ENCODE measurements at regions of chr2 and their contacts with region 1.

Region 1: GRCh38 chr2:158456309-158457066 is at the starts of genes CCDC148 and PKP4:
- DNase-seq: peak; percentile 94
- H3K4me3 ChIP-seq: peak within 1 kb of the TSS; percentile 53 to 86 (median 81)
- H3K27ac ChIP-seq: peak within 1 kb of the TSS; percentile 75
- H3K4me1 ChIP-seq: peaks cover 36% of the 10 kb centered on the region
- H3K27me3 ChIP-seq: peaks cover 7 to 13% of the 10 kb centered on the region in 2 experiments
- CTCF ChIP-seq: no peak
- POLR2A ChIP-seq: no peak
- total RNA-seq, gene CCDC148: 0.69 TPM in 1 of 2 replicates, not detected in the other
- total RNA-seq, gene PKP4: 55.1 and 68.5 TPM in 2 replicates

Region 2: GRCh38 chr2:157784169-157784822 is 672.2 kb before region 1 on chr2:
- CTCF ChIA-PET with region 1: no interaction called
- POLR2A ChIA-PET with region 1: no interaction called
- dilution Hi-C with region 1: no loop called
- intact Hi-C with region 1: loop called (anchors 10 kb)
- DNase-seq: peak; percentile 82
- H3K4me3 ChIP-seq: no peak overlapping the region
- H3K27ac ChIP-seq: peak overlapping the region; percentile 44
- H3K4me1 ChIP-seq: peaks cover 40% of the 10 kb centered on the region
- H3K27me3 ChIP-seq: no peaks in the 10 kb centered on the region
- CTCF ChIP-seq: no peak
- POLR2A ChIP-seq: no peak

Region 3: GRCh38 chr2:158179660-158180059 is 276.8 kb before region 1 on chr2:
- CTCF ChIA-PET with region 1: interaction called, 7 read pairs
- POLR2A ChIA-PET with region 1: no interaction called
- dilution Hi-C with region 1: no loop called
- intact Hi-C with region 1: loop called (anchors 1 kb)
- DNase-seq: peak; percentile 48
- H3K4me3 ChIP-seq: no peak overlapping the region
- H3K27ac ChIP-seq: no peak overlapping the region
- H3K4me1 ChIP-seq: no peaks in the 10 kb centered on the region
- H3K27me3 ChIP-seq: peaks cover 14 to 22% of the 10 kb centered on the region in 2 experiments
- CTCF ChIP-seq: peak in 1 of 2 donors; percentile 27
- POLR2A ChIP-seq: no peak

Region 4: GRCh38 chr2:158600155-158600802 is 143.8 kb after region 1 on chr2:
- CTCF ChIA-PET with region 1: interaction called, 3 read pairs
- POLR2A ChIA-PET with region 1: interaction called, 4 read pairs
- dilution Hi-C with region 1: no loop called
- intact Hi-C with region 1: loop called (anchors 1 kb)
- DNase-seq: peak; percentile 99
- H3K4me3 ChIP-seq: no peak overlapping the region
- H3K27ac ChIP-seq: peak overlapping the region; percentile 83
- H3K4me1 ChIP-seq: peaks cover 27% of the 10 kb centered on the region
- H3K27me3 ChIP-seq: no peaks in the 10 kb centered on the region
- CTCF ChIP-seq: no peak
- POLR2A ChIP-seq: no peak

Region 5: GRCh38 chr2:158635961-158636601 is 179.6 kb after region 1 on chr2:
- CTCF ChIA-PET with region 1: no interaction called
- POLR2A ChIA-PET with region 1: no interaction called
- dilution Hi-C with region 1: no loop called
- intact Hi-C with region 1: loop called (anchors 1 kb)
- DNase-seq: peak; percentile 75
- H3K4me3 ChIP-seq: no peak overlapping the region
- H3K27ac ChIP-seq: peak overlapping the region; percentile 61
- H3K4me1 ChIP-seq: peaks cover 14% of the 10 kb centered on the region
- H3K27me3 ChIP-seq: no peaks in the 10 kb centered on the region
- CTCF ChIP-seq: no peak
- POLR2A ChIP-seq: no peak

Region 6: DNA sequence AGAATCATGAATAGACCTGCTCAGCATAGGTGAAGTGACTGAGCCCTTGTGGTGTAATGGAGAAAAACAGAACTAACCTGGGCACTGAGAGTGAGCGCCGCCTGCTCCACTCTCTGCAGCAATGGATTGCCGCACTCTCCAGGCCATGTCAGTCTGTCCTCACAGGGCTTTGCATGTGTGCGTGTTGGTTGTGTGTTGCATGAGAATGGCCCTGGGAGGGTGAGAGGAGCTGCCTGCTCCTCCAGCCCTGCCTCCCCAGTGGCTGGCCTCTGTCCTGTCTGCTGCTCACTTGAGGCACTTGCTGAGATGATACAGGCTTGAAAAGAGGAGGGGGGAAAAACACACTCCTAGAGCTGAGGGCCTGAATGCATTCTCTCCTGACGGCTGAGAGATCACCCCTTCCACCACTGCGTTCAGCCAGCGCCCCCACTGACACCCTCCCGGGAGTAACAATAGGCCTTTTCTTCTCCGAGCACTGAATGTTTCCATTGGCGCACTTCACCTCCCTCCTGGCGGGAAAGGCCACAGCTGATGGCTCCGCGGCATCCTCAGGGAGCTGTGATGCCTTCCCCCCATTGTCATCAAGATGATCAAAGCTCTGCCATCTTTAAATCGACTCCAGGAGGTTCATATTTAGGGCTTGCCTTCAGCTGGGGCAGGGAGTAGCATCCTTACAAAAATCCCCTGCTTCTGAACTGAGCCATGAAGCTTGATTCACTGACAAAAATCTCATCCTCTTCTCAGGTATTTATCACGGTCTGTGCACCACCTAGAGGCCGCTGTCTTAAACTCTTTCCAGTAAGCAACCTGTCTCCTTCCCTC is 288.8 kb after region 1 on chr2:
- CTCF ChIA-PET with region 1: interaction called, 63 read pairs
- POLR2A ChIA-PET with region 1: no interaction called
- dilution Hi-C with region 1: no loop called
- intact Hi-C with region 1: loop called (anchors 1 kb)
- DNase-seq: peak; percentile 80
- H3K4me3 ChIP-seq: no peak overlapping the region
- H3K27ac ChIP-seq: no peak overlapping the region
- H3K4me1 ChIP-seq: peaks cover 3% of the 10 kb centered on the region
- H3K27me3 ChIP-seq: peaks cover 23 to 28% of the 10 kb centered on the region in 2 experiments
- CTCF ChIP-seq: peak; percentile 46 to 53
- POLR2A ChIP-seq: no peak